T-cell (primary cell): ENCODE measurements at regions of chr16 and their contacts with region 1.

Region 1: GRCh38 chr16:24539850-24540601 is 660 bp downstream of the RBBP6 start:
- DNase-seq: peak in 9 of 35 experiments; percentile 10 to 53 (median 32)
- ATAC-seq: peak in 3 of 4 experiments; percentile 33 to 38 (median 37)
- H3K4me3 ChIP-seq: peak overlapping the region; percentile 92 to 97
- H3K4me3 Mint-ChIP-seq: peak overlapping the region; percentile 88 to 99 (median 91)
- H3K27ac ChIP-seq: peak overlapping the region; percentile 99
- H3K27ac Mint-ChIP-seq: peak overlapping the region; percentile 81 to 83
- H3K4me1 ChIP-seq: peaks cover 16 to 30% of the 10 kb centered on the region in 2 experiments
- H3K4me1 Mint-ChIP-seq: peaks cover 39 to 45% (median 43%) of the 10 kb centered on the region in 3 donors
- H3K27me3 ChIP-seq: no peaks in the 10 kb centered on the region
- H3K27me3 Mint-ChIP-seq: no peaks in the 10 kb centered on the region

Region 2: GRCh38 chr16:24504472-24505345 is 35.3 kb before region 1 on chr16:
- CTCF ChIA-PET with region 1: no interaction called
- POLR2A ChIA-PET with region 1: no interaction called
- DNase-seq: peak in 34 of 35 experiments; percentile 10 to 79 (median 32)
- ATAC-seq: peak; percentile 55 to 88 (median 86)
- H3K4me3 ChIP-seq: no peak overlapping the region
- H3K4me3 Mint-ChIP-seq: no peak overlapping the region
- H3K27ac ChIP-seq: no peak overlapping the region
- H3K27ac Mint-ChIP-seq: no peak overlapping the region
- H3K4me1 ChIP-seq: no peaks in the 10 kb centered on the region
- H3K4me1 Mint-ChIP-seq: no peaks in the 10 kb centered on the region
- H3K27me3 ChIP-seq: peaks cover 0 to 29% of the 10 kb centered on the region in 2 experiments
- H3K27me3 Mint-ChIP-seq: peaks cover 19 to 22% of the 10 kb centered on the region in 2 donors

Region 3: DNA sequence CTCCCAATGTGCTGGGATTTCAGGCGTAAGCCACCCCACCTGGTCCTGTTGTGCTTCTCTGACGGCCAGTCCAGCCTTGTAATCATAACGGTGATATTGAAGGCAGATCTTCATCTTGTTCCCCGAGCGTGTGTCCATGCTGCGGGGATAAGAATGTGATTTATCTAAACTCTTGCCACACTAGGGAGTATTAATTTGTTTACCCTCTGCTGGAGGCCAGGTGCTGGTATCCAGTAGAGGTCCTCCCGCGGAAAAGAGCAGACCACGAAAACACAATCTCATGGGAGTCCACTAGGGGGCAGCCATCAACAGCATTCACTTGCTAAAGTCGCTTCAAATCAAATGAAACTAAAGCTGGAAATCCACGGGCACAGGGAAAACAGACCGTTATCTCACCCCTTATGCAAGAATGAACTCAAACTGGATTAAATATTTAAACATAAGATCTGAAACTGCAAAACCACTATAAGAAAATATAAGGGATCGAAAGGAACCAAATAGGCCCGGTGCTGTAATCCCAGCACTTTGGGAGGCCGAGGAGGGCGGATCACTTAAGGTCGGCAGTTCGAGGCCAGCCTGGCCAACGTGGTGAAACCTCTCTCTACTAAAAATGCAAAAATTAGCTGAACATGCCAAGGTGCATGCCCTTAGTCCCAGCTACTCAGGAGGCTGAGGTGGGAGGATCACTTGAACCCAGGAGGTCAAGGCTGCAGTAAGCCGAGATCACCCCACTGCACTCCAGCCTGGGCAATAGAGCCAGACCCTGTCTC is 22.9 kb before region 1 on chr16:
- CTCF ChIA-PET with region 1: interaction called, 3 to 11 read pairs
- POLR2A ChIA-PET with region 1: no interaction called
- DNase-seq: peak; percentile 32 to 84 (median 62)
- ATAC-seq: peak; percentile 63 to 75 (median 74)
- H3K4me3 ChIP-seq: no peak overlapping the region
- H3K4me3 Mint-ChIP-seq: peak overlapping the region in 1 of 3 donors; percentile 5
- H3K27ac ChIP-seq: no peak overlapping the region
- H3K27ac Mint-ChIP-seq: no peak overlapping the region
- H3K4me1 ChIP-seq: peaks cover 0 to 8% of the 10 kb centered on the region in 2 experiments
- H3K4me1 Mint-ChIP-seq: peaks cover 5 to 8% (median 5%) of the 10 kb centered on the region in 3 donors
- H3K27me3 ChIP-seq: peaks cover 0 to 9% of the 10 kb centered on the region in 2 experiments
- H3K27me3 Mint-ChIP-seq: peaks cover 3 to 8% of the 10 kb centered on the region in 2 donors

Region 4: DNA sequence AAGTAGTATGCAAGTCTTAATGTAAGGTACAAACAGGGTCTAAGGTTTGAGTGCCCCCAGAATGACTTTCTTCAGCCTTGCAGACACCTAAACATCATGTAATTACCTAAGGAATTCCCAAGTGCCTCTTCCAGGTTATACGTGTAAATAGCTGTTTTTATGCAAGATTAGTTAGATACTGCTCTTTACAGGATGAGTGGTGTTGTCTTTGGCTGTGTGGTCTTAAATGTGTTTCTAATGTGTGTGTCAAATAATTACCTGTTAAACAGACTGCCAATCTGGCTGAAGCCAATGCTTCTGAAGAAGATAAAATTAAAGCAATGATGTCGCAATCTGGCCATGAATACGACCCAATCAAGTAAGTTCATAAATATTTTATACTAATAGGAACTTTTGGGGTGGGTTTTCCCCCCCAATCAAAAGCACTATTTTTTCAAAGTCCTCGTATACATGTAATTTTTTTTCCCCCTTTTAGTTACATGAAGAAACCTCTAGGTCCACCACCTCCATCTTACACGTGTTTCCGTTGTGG is 15.4 kb after region 1 on chr16:
- CTCF ChIA-PET with region 1: interaction called in 1 of 2 experiments, 7 read pairs
- POLR2A ChIA-PET with region 1: interaction called, 3 to 12 read pairs
- DNase-seq: no peak
- ATAC-seq: no peak
- H3K4me3 ChIP-seq: no peak overlapping the region
- H3K4me3 Mint-ChIP-seq: no peak overlapping the region
- H3K27ac ChIP-seq: no peak overlapping the region
- H3K27ac Mint-ChIP-seq: no peak overlapping the region
- H3K4me1 ChIP-seq: peaks cover 0 to 2% of the 10 kb centered on the region in 2 experiments
- H3K4me1 Mint-ChIP-seq: peaks cover 8 to 24% (median 19%) of the 10 kb centered on the region in 3 donors
- H3K27me3 ChIP-seq: no peaks in the 10 kb centered on the region
- H3K27me3 Mint-ChIP-seq: no peaks in the 10 kb centered on the region

Region 5: DNA sequence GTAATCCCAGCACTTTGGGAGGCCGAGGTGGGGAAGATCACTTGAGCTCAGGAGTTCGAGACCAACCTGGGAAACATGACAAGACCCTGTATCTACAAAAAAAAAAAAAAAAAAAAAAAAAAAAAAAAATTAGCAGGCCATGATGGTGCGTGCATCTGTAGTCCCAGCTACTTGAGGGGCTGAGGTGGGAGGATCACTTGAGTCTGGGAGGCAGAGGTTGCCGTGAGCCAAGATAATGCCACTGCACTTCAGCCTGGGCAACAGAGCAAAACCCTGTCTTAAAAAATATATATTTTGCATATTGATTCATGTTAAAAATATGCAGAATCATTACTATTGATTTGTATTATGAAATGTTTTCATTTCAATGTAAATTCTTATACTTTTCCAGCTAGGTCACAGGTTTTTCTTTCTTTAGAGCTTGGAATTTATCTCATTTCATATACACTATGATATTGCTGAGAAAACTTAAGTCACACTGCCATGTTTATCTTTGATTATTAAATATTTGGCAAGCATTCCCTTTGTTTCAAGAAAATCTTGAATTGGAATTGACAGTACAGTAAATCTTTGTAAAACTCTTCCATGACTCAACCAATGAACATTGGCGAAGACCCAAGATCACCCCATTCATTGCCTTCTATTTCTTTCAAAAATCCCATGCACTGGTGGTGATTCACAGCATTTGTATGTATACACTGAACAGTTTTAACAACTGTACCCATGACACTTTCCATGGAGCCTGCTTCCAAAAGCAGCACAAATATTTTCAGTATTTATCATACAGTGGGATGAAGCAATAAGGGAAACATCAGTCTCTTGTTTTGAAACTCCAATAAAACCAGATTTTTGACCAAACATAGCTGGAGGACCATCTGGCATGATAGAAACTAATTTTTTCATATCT is 106.0 kb after region 1 on chr16:
- CTCF ChIA-PET with region 1: no interaction called
- POLR2A ChIA-PET with region 1: no interaction called
- DNase-seq: no peak
- ATAC-seq: no peak
- H3K4me3 ChIP-seq: no peak overlapping the region
- H3K4me3 Mint-ChIP-seq: no peak overlapping the region
- H3K27ac ChIP-seq: no peak overlapping the region
- H3K27ac Mint-ChIP-seq: no peak overlapping the region
- H3K4me1 ChIP-seq: no peaks in the 10 kb centered on the region
- H3K4me1 Mint-ChIP-seq: no peaks in the 10 kb centered on the region
- H3K27me3 ChIP-seq: peaks cover 0 to 17% of the 10 kb centered on the region in 2 experiments
- H3K27me3 Mint-ChIP-seq: peaks cover 15 to 25% of the 10 kb centered on the region in 2 donors